PC-9 (cell line): ENCODE measurements at regions of chr10 and their contacts with region 1.

Region 1: DNA sequence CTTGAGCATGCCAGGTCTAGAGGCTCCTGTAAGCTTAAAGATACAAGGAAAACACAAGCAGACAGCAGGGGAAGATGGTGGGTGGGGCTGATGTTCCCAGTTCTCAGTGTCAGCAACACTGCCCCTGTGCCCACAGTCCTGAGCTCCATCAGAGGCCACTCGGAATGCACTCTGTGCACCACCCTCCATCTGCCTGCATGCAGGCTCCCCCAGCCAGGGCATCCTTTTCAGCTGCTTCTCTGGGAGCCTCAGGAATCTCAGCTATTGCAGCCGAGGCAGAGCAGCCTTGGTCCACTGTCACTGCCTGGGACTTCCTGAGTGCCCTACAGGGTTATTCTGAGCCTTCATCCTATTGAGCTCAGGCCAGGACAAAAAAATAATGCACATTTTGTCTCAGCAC is 22.2 kb downstream of the LBX1 start:
- DNase-seq: no peak
- H3K4me3 ChIP-seq: no peak overlapping the region
- H3K27ac ChIP-seq: no peak overlapping the region
- H3K4me1 ChIP-seq: no peaks in the 10 kb centered on the region
- H3K27me3 ChIP-seq: peaks cover 42% of the 10 kb centered on the region
- CTCF ChIP-seq: no peak

Region 2: GRCh38 chr10:101152316-101152715 is 54.7 kb before region 1 on chr10:
- CTCF ChIA-PET with region 1: no interaction called
- POLR2A ChIA-PET with region 1: interaction called, 19 read pairs
- intact Hi-C with region 1: no loop called
- DNase-seq: no peak
- H3K4me3 ChIP-seq: no peak overlapping the region
- H3K27ac ChIP-seq: no peak overlapping the region
- H3K4me1 ChIP-seq: no peaks in the 10 kb centered on the region
- H3K27me3 ChIP-seq: peaks cover 69% of the 10 kb centered on the region
- CTCF ChIP-seq: no peak